ENCODE measurements at regions of chr16 and their contacts with region 1.

Region 1: DNA sequence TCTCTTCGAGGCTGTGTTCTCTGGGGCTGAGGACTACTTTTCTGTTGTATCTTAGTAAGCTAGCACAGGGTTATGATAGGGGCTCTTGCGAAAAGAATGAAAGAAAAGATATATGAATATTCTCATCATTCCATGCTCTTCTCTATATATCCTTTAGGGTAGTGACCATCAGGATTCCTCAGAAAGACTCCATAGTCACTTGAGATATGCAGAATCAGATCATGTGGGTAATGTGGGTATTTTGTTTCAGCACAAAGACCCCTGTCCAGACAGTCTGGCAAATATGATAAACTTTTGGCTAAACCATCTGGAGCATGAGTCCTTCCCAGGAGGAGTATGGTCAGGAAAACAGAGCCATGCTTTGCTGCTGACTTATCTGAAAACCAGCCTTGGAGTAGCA is 21.5 kb downstream of the CRYM start:
- DNase-seq: no peak
- ATAC-seq: no peak
- H3K4me3 ChIP-seq: no peak overlapping the region
- H3K27ac ChIP-seq: no peak overlapping the region
- H3K4me1 ChIP-seq: peaks cover 0 to 3% (median 0%) of the 10 kb centered on the region in 3 donors
- H3K27me3 ChIP-seq: no peaks in the 10 kb centered on the region
- CTCF ChIP-seq: no peak

Region 2: GRCh38 chr16:21194771-21195301 is 61.8 kb before region 1 on chr16:
- intact Hi-C with region 1: no loop called
- DNase-seq: no peak
- ATAC-seq: no peak
- H3K4me3 ChIP-seq: no peak overlapping the region
- H3K27ac ChIP-seq: no peak overlapping the region
- H3K4me1 ChIP-seq: no peaks in the 10 kb centered on the region
- H3K27me3 ChIP-seq: no peaks in the 10 kb centered on the region
- CTCF ChIP-seq: no peak

Region 3: GRCh38 chr16:21218153-21218552 is 38.5 kb before region 1 on chr16:
- intact Hi-C with region 1: loop called in 1 of 3 experiments (anchors 5 kb)
- DNase-seq: no peak
- ATAC-seq: no peak
- H3K4me3 ChIP-seq: no peak overlapping the region
- H3K27ac ChIP-seq: no peak overlapping the region
- H3K4me1 ChIP-seq: no peaks in the 10 kb centered on the region
- H3K27me3 ChIP-seq: no peaks in the 10 kb centered on the region
- CTCF ChIP-seq: no peak

Region 4: GRCh38 chr16:21338537-21339268 is 82.1 kb after region 1 on chr16:
- intact Hi-C with region 1: no loop called
- DNase-seq: no peak
- ATAC-seq: no peak
- H3K4me3 ChIP-seq: no peak overlapping the region
- H3K27ac ChIP-seq: no peak overlapping the region
- H3K4me1 ChIP-seq: no peaks in the 10 kb centered on the region
- H3K27me3 ChIP-seq: no peaks in the 10 kb centered on the region
- CTCF ChIP-seq: no peak

Region 5: GRCh38 chr16:21638573-21638975 is 381.9 kb after region 1 on chr16:
- intact Hi-C with region 1: no loop called
- DNase-seq: no peak
- ATAC-seq: peak in 2 of 4 donors; percentile 18 to 31
- H3K4me3 ChIP-seq: no peak overlapping the region
- H3K27ac ChIP-seq: no peak overlapping the region
- H3K4me1 ChIP-seq: no peaks in the 10 kb centered on the region
- H3K27me3 ChIP-seq: no peaks in the 10 kb centered on the region
- CTCF ChIP-seq: no peak